GM12878 (cell line): ENCODE measurements at regions of chr20 and their contacts with region 1.

Region 1: GRCh38 chr20:44683263-44684046 is 31.7 kb upstream of the CCN5 start:
- DNase-seq: peak; percentile 45
- ATAC-seq: peak; percentile 96
- H3K4me3 ChIP-seq: no peak overlapping the region
- H3K27ac ChIP-seq: no peak overlapping the region
- H3K4me1 ChIP-seq: peaks cover 6% of the 10 kb centered on the region
- H3K27me3 ChIP-seq: no peaks in the 10 kb centered on the region
- CTCF ChIP-seq: peak; percentile 78 to 91 (median 79); a peak in 5 of 6 replicates
- EP300 ChIP-seq: no peak
- POLR2A ChIP-seq: no peak
- RAD21 ChIP-seq: peak; percentile 92

Region 2: DNA sequence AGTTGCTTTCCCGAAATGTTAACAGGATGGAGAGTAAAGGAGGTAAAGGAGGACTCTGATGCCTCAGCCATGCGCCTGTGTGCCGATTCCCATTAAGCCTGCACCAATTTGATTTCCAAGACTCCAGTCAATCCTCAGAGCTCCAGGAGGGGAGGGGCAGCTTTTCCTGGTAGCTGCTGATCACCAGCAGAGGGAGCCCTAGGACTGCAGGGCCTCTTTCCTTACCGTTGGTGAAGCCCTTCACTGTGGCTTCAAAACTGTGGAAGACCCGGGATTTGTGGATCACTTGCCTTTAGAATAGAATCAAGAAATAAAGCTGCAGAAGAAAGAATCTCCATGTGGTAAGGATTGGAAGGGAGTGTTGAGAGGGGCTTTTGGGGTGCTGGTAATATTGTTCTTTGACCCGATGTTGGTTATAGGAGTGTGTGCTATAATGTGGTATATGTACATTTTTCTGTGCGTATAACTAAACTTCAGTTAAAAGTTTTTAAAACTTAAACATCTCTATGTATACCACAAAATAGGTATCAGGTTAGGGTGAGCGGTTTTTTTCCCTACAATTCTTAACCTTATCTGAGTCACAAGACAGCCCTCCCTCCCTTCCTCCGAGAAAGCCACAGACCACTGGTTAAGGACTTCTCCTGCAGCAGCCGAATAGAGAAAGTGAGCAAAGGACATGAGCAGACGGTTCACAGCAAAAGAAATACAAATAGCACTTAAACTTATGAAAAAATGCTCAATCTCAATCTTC is 465.9 kb before region 1 on chr20:
- CTCF ChIA-PET with region 1: interaction called, 5 read pairs
- POLR2A ChIA-PET with region 1: no interaction called
- RAD21 ChIA-PET with region 1: interaction called, 5 read pairs
- SMC1A ChIA-PET with region 1: no interaction called
- in situ Hi-C with region 1: no loop called
- intact Hi-C with region 1: loop called (anchors 5 kb)
- DNase-seq: no peak
- ATAC-seq: peak; percentile 80
- H3K4me3 ChIP-seq: no peak overlapping the region
- H3K27ac ChIP-seq: no peak overlapping the region
- H3K4me1 ChIP-seq: peaks cover 14% of the 10 kb centered on the region
- H3K27me3 ChIP-seq: no peaks in the 10 kb centered on the region
- CTCF ChIP-seq: peak; percentile 92 to 97 (median 94)
- EP300 ChIP-seq: no peak
- POLR2A ChIP-seq: no peak
- RAD21 ChIP-seq: peak; percentile 98

Region 3: GRCh38 chr20:44576297-44576696 is 107.2 kb before region 1 on chr20:
- CTCF ChIA-PET with region 1: interaction called, 55 read pairs
- POLR2A ChIA-PET with region 1: no interaction called
- RAD21 ChIA-PET with region 1: interaction called, 31 read pairs
- SMC1A ChIA-PET with region 1: interaction called, 33 read pairs
- in situ Hi-C with region 1: no loop called
- intact Hi-C with region 1: no loop called
- DNase-seq: no peak
- ATAC-seq: peak; percentile 86
- H3K4me3 ChIP-seq: no peak overlapping the region
- H3K27ac ChIP-seq: no peak overlapping the region
- H3K4me1 ChIP-seq: peaks cover 27% of the 10 kb centered on the region
- H3K27me3 ChIP-seq: no peaks in the 10 kb centered on the region
- CTCF ChIP-seq: peak; percentile 51 to 64 (median 59)
- EP300 ChIP-seq: no peak
- POLR2A ChIP-seq: no peak
- RAD21 ChIP-seq: peak; percentile 77

Region 4: DNA sequence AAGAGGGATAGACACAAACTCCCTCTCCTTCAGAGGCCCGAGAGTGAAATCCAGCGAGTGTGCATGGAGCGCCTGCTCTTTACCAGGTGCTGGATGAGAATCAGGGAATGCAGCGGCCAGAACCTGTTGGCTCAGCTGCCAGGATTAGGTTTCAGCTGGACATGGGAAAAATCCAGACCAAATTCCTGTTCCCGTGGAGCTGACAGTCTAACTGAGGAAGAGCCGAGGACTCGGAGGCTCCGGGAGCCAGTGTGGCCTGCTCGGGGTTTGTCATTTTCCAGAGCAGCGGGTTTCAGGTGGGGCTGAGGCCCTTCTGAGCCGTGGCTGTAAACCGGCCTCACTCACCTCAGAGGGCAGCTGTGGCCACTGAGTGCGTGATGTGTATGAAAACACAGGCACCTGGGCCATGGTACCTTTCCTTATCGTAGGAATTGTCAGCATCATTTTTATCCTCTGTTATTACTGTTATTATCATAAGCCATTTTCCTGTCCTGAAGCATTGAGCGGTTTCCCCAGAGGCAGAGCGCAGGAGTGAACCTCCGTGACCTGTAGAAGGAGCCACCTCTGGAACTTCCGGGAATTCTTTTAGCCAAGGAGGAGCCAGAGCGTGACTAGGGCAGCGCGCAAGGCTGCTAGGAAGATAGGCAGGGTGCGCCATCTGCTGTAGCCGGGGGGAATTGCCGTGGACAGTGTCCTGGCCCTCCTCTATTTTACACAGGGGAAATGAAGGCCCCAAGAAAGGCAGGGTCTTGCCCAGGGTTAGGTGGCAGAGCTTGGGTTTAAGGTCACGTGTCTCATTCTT is 73.7 kb before region 1 on chr20:
- CTCF ChIA-PET with region 1: interaction called, 103 read pairs
- POLR2A ChIA-PET with region 1: interaction called, 3 read pairs
- RAD21 ChIA-PET with region 1: interaction called, 56 read pairs
- SMC1A ChIA-PET with region 1: interaction called, 58 read pairs
- in situ Hi-C with region 1: no loop called
- intact Hi-C with region 1: loop called (anchors 1 kb)
- DNase-seq: no peak
- ATAC-seq: peak; percentile 98
- H3K4me3 ChIP-seq: no peak overlapping the region
- H3K27ac ChIP-seq: peak overlapping the region; percentile 57
- H3K4me1 ChIP-seq: peaks cover 13% of the 10 kb centered on the region
- H3K27me3 ChIP-seq: no peaks in the 10 kb centered on the region
- CTCF ChIP-seq: peak; percentile 98 to 99 (median 99); a peak in 5 of 6 replicates
- EP300 ChIP-seq: no peak
- POLR2A ChIP-seq: no peak
- RAD21 ChIP-seq: peak; percentile 99

Region 5: GRCh38 chr20:44633187-44633810 is 50.2 kb before region 1 on chr20:
- CTCF ChIA-PET with region 1: interaction called, 17 read pairs
- POLR2A ChIA-PET with region 1: no interaction called
- RAD21 ChIA-PET with region 1: interaction called, 5 read pairs
- SMC1A ChIA-PET with region 1: interaction called, 46 read pairs
- in situ Hi-C with region 1: no loop called
- intact Hi-C with region 1: no loop called
- DNase-seq: no peak
- ATAC-seq: no peak
- H3K4me3 ChIP-seq: no peak overlapping the region
- H3K27ac ChIP-seq: no peak overlapping the region
- H3K4me1 ChIP-seq: no peaks in the 10 kb centered on the region
- H3K27me3 ChIP-seq: no peaks in the 10 kb centered on the region
- CTCF ChIP-seq: no peak
- EP300 ChIP-seq: no peak
- POLR2A ChIP-seq: no peak
- RAD21 ChIP-seq: no peak

Region 6: GRCh38 chr20:44664131-44664530 is 19.3 kb before region 1 on chr20:
- CTCF ChIA-PET with region 1: interaction called, 32 read pairs
- POLR2A ChIA-PET with region 1: no interaction called
- RAD21 ChIA-PET with region 1: interaction called, 13 read pairs
- SMC1A ChIA-PET with region 1: interaction called, 14 read pairs
- in situ Hi-C with region 1: no loop called
- intact Hi-C with region 1: no loop called
- DNase-seq: no peak
- ATAC-seq: no peak
- H3K4me3 ChIP-seq: no peak overlapping the region
- H3K27ac ChIP-seq: no peak overlapping the region
- H3K4me1 ChIP-seq: no peaks in the 10 kb centered on the region; the same call in 1 of the 2 replicates
- H3K27me3 ChIP-seq: no peaks in the 10 kb centered on the region
- CTCF ChIP-seq: no peak
- EP300 ChIP-seq: no peak
- POLR2A ChIP-seq: no peak
- RAD21 ChIP-seq: no peak

Region 7: GRCh38 chr20:44738813-44739477 is 55.5 kb after region 1 on chr20:
- CTCF ChIA-PET with region 1: interaction called, 91 read pairs
- POLR2A ChIA-PET with region 1: no interaction called
- RAD21 ChIA-PET with region 1: no interaction called
- SMC1A ChIA-PET with region 1: interaction called, 25 read pairs
- in situ Hi-C with region 1: loop called (anchors 5 kb)
- intact Hi-C with region 1: no loop called
- DNase-seq: peak; percentile 63
- ATAC-seq: peak; percentile 90
- H3K4me3 ChIP-seq: no peak overlapping the region
- H3K27ac ChIP-seq: no peak overlapping the region
- H3K4me1 ChIP-seq: no peaks in the 10 kb centered on the region
- H3K27me3 ChIP-seq: no peaks in the 10 kb centered on the region
- CTCF ChIP-seq: no peak
- EP300 ChIP-seq: no peak
- POLR2A ChIP-seq: no peak
- RAD21 ChIP-seq: no peak